BJ (cell line): ENCODE measurements at regions of chr6 and their contacts with region 1.

Region 1: DNA sequence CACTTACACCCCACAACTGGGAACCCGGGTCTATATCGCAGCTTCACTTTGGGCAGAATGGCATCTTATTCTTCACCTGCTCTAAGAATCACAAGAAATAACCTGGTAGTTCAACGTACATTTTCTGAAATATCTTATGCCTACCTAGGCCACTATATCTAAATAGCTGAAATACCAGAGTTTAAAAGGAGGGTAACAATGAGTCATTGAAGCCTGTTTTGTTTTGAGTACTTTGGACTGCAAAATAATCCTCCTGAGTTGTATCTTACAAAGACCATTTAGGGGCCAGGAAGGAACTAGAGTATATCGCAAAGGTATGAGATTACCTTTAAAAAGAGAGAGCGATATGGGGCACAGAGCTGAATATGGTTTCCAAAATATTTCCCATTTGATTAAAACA is 96.7 kb upstream of the NUP153 start:
- DNase-seq: no peak
- H3K4me3 ChIP-seq: no peak overlapping the region
- H3K27me3 ChIP-seq: no peaks in the 10 kb centered on the region
- CTCF ChIP-seq: no peak

Region 2: GRCh38 chr6:17156112-17156921 is 647.1 kb before region 1 on chr6:
- CTCF ChIA-PET with region 1: interaction called, 10 read pairs
- POLR2A ChIA-PET with region 1: no interaction called
- DNase-seq: peak; percentile 39
- H3K4me3 ChIP-seq: no peak overlapping the region
- H3K27me3 ChIP-seq: no peaks in the 10 kb centered on the region
- CTCF ChIP-seq: peak; percentile 67

Region 3: GRCh38 chr6:17334265-17334664 is 469.1 kb before region 1 on chr6:
- CTCF ChIA-PET with region 1: no interaction called
- POLR2A ChIA-PET with region 1: no interaction called
- DNase-seq: no peak
- H3K4me3 ChIP-seq: no peak overlapping the region
- H3K27me3 ChIP-seq: no peaks in the 10 kb centered on the region
- CTCF ChIP-seq: no peak

Region 4: GRCh38 chr6:17584241-17584803 is 219.1 kb before region 1 on chr6:
- CTCF ChIA-PET with region 1: interaction called, 15 read pairs
- POLR2A ChIA-PET with region 1: no interaction called
- DNase-seq: peak; percentile 37
- H3K4me3 ChIP-seq: no peak overlapping the region
- H3K27me3 ChIP-seq: no peaks in the 10 kb centered on the region
- CTCF ChIP-seq: peak; percentile 66

Region 5: DNA sequence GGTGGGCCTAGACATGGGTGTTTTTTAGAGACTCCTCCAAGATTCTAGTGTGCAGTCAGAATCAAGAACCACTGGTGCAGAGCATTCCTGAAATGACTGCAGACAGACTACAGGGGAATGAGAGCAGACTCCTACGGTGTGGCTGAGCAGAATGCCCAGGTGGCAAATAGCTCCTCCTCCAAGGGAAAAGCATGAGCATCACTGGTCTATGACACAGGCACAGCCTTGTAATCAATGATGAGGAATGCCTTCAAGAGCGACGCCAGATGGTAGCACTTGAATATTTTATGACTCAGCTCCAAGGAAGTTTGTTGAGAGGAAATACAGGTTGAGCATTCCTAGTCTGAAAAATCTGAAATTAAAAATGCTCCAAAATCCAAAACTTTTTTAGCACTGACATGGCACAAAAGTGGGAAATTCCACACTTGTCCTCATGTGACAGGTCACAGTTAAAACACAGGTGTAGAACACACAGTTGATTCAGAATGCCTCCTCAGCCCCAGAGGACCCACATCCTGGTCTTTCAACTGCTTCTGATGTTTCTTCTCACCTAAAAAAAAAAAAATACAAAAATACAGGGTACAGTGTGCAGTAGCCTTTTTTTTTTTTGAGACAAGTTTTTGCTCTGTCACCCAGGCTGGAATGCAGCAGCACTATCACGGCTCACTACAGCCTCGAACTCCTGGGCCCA is 213.9 kb before region 1 on chr6:
- CTCF ChIA-PET with region 1: interaction called, 15 read pairs
- POLR2A ChIA-PET with region 1: no interaction called
- DNase-seq: peak; percentile 33
- H3K4me3 ChIP-seq: no peak overlapping the region
- H3K27me3 ChIP-seq: no peaks in the 10 kb centered on the region
- CTCF ChIP-seq: no peak

Region 6: GRCh38 chr6:17785094-17785787 is 18.2 kb before region 1 on chr6:
- CTCF ChIA-PET with region 1: interaction called, 18 read pairs
- POLR2A ChIA-PET with region 1: no interaction called
- DNase-seq: no peak
- H3K4me3 ChIP-seq: no peak overlapping the region
- H3K27me3 ChIP-seq: no peaks in the 10 kb centered on the region
- CTCF ChIP-seq: no peak

Region 7: DNA sequence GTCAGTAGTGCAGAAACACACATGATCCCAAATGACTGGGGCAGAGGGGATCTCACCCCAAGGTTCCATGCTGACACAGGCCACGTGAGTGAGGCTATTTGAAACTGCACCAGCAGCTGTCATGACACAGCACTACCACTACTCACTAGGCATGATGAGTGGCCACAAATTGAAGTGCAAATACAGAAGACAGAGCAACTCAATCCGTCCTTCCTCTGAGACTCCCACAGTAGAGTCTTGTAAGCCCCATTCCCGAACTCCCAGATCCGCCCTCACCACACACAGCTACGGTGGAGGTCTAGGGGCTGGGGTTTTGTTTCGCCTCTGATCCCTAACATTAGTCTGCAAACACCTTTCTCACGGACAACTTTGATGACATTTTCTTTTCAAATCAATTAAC is 16.6 kb after region 1 on chr6:
- CTCF ChIA-PET with region 1: interaction called, 28 read pairs
- POLR2A ChIA-PET with region 1: no interaction called
- DNase-seq: no peak
- H3K4me3 ChIP-seq: no peak overlapping the region
- H3K27me3 ChIP-seq: no peaks in the 10 kb centered on the region
- CTCF ChIP-seq: no peak

Region 8: DNA sequence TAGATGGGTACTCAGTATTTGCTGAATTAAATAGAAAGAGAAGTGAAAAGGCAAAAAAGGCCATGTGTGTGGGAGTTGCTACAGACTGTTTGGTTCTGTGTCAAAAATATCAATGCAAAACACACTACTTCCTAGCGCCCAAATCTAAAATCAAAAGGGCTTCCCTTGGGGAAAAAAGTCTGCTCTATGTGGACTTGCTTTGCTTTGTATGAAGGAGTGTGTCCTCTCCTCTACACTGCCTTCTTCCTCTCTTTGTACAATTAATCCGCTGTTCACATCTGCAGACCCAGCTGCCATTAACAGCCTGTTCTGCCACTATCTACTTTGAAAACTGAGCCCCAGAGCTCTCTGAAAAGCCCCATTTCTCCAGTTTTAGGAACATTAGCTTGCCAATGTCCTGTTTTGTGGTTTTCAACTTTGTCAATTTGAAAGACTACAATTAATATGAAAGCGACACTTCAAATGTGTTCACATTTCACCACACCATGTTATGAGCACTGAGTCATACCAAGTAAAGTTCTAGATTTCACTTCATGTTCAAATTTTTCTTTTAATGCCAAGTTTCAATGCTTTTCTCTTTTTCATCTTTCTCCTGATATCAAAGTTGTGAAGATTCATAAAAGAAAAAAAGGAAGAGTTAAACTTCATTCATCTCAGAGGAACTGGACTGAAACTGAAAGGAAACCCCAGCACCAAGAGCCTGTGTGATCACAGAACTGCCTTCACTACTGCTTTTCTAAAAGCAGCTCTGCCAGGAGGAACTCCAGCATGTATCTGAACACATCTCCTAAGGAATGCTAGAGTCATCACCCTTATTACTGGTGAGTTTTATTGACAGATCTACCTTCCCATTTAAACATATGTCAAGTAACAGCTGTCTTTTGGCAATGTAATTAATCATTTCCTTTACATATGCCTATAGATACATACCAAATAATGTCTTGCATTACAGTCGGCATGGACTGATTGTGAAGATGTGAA is 81.4 kb after region 1 on chr6:
- CTCF ChIA-PET with region 1: no interaction called
- POLR2A ChIA-PET with region 1: no interaction called
- DNase-seq: no peak
- H3K4me3 ChIP-seq: no peak overlapping the region
- H3K27me3 ChIP-seq: no peaks in the 10 kb centered on the region
- CTCF ChIP-seq: no peak